Activated CD4-positive, alpha-beta memory T cell treated with anti-CD3 and anti-CD28 coated beads, Interleukin-2, amount 10 ng/mL, durations not matched to agents 7 days and 5 days (primary cell): ENCODE measurements at regions of chr2 and their contacts with region 1.

Region 1: DNA sequence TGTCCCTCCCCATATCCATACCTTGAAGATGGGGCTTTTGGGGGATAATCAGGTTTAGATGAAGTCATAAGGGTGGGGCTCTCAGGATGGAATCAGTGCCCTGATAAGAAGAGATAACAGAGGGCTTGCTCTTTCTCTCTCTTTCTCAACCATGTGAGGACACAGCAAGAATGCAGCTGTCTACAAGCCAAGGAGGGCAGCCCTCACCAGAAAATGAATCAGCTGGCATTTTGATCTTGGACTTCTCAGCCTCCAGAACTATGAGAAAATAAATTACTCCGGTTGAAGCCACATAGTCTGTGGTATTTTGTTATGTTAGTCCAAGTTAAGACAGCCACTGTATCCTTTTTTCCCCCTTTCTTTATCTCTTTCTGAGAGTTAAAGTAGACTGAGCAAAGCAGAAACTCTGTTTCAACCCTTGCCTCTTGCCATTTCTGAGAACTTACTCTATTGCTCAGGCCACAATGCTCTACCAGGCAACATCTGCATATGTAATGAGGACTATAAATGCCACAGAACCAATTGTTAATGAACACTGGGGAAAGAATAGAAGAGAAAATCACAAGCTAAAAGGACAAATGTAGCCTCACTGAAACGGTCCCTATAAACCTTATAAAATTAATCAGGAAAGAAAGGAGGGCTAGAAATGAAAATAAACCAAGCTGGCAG is 56.9 kb downstream of the SRBD1 start:
- DNase-seq: no peak
- H3K4me3 Mint-ChIP-seq: no peak overlapping the region
- H3K27ac Mint-ChIP-seq: peak overlapping the region; percentile 61
- H3K4me1 Mint-ChIP-seq: peaks cover 28% of the 10 kb centered on the region
- H3K27me3 Mint-ChIP-seq: no peaks in the 10 kb centered on the region

Region 2: DNA sequence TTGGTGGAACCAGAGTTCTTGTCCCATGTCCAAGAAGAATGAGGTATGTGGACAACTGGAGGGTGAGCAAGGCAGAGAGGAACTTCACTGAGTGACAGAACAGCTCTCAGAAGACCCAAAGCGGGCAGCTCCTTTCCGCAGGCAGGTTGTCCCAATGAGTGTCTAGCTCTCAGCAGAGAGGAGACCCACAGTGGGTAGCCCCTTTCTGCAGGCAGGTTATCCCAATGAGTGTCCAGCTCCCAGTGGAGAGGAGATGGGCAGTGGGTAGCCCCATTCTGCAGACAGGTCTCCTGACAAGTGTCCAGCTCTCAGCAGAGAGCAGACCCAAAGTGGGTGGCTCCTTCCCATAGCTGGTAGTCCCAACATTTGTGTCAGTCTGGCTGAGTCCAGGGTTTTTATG is 12.8 kb before region 1 on chr2:
- CTCF ChIA-PET with region 1: no interaction called
- POLR2A ChIA-PET with region 1: no interaction called
- DNase-seq: no peak
- H3K4me3 Mint-ChIP-seq: no peak overlapping the region
- H3K27ac Mint-ChIP-seq: no peak overlapping the region
- H3K4me1 Mint-ChIP-seq: no peaks in the 10 kb centered on the region
- H3K27me3 Mint-ChIP-seq: no peaks in the 10 kb centered on the region

Region 3: GRCh38 chr2:45567974-45568789 is 14.0 kb after region 1 on chr2:
- CTCF ChIA-PET with region 1: no interaction called
- POLR2A ChIA-PET with region 1: interaction called, 17 read pairs
- DNase-seq: no peak
- H3K4me3 Mint-ChIP-seq: peak overlapping the region; percentile 79
- H3K27ac Mint-ChIP-seq: peak overlapping the region; percentile 89
- H3K4me1 Mint-ChIP-seq: peaks cover 27% of the 10 kb centered on the region
- H3K27me3 Mint-ChIP-seq: no peaks in the 10 kb centered on the region